IMR-90 (cell line): ENCODE measurements at regions of chr17 and their contacts with region 1.

Region 1: GRCh38 chr17:1896243-1897104 is 66.7 kb downstream of the RPA1 start:
- DNase-seq: no peak
- ATAC-seq: no peak
- H3K4me3 ChIP-seq: no peak overlapping the region
- H3K27ac ChIP-seq: no peak overlapping the region
- H3K4me1 ChIP-seq: no peaks in the 10 kb centered on the region
- H3K27me3 ChIP-seq: no peaks in the 10 kb centered on the region
- CTCF ChIP-seq: no peak
- POLR2A ChIP-seq: no peak
- RAD21 ChIP-seq: no peak

Region 2: DNA sequence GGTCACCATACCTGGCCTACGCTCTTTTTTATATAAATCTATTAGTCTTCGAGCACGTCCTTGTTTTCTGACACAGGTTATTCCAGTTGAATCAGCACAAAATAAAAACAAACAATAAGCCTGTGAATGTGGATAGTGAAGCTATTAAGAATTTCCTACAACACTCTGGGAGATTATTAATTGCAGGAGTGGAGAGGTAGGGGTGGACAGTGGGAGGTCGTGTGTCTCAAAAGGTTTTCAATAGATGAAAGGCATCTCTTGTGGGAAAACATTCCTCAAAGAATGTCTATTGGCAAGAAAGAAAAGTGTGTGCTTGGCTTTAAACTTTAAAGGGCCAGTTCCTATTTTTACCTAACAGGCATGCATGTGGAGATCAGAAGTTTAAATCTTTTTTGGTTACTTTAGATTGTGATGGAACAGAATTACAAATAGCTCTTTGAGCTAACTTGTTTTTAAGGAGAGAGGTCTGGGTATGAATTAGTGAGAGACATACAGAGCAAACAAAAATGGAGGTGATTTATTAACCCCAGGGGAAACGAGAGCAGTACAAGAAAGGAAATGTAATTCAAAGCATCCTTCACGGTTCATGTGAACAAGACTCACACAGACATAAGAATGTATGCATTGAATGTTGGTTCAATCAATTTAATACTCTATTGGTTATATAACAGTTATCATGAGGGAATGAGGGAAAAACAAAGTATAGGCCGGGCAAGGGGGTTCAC is 75.8 kb before region 1 on chr17:
- CTCF ChIA-PET with region 1: no interaction called
- POLR2A ChIA-PET with region 1: interaction called, 20 read pairs
- dilution Hi-C with region 1: no loop called
- in situ Hi-C with region 1: no loop called
- intact Hi-C with region 1: no loop called
- DNase-seq: no peak
- ATAC-seq: no peak
- H3K4me3 ChIP-seq: no peak overlapping the region
- H3K27ac ChIP-seq: no peak overlapping the region
- H3K4me1 ChIP-seq: no peaks in the 10 kb centered on the region
- H3K27me3 ChIP-seq: no peaks in the 10 kb centered on the region
- CTCF ChIP-seq: no peak
- POLR2A ChIP-seq: no peak
- RAD21 ChIP-seq: no peak

Region 3: DNA sequence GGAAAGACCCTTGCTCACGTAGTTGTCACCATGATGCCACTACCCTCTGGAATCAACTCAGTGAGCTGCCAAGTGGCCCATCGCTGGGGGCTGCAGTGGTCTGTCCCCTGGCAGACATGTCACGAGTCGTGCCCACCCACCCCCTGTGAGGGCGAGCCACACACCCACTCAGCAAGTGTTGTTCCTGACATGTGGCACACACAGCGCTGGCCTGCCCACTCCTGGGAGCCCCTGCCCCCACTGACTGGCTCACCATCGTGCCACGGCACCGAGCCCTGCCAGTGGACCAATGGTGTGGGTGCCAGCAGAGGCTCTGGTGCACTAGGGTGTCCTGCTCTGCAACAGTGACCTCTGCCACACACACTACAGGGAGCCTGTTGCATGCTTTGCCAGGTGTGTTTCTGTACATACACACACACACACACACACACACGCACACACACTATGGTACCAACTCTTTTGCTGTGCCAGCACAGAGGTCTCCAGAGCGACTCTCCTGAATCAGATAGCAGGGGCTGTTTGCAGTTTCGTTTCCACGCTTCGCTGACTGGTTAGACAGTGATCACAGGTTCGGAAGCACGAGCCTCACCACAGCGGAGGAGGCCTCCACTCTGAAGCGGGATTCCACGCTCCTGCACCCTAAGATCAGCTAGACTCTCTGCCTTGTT is 120.9 kb after region 1 on chr17:
- CTCF ChIA-PET with region 1: no interaction called
- POLR2A ChIA-PET with region 1: no interaction called
- dilution Hi-C with region 1: no loop called
- in situ Hi-C with region 1: no loop called
- intact Hi-C with region 1: no loop called
- DNase-seq: no peak
- ATAC-seq: no peak
- H3K4me3 ChIP-seq: no peak overlapping the region
- H3K27ac ChIP-seq: no peak overlapping the region
- H3K4me1 ChIP-seq: no peaks in the 10 kb centered on the region
- H3K27me3 ChIP-seq: peaks cover 69% of the 10 kb centered on the region
- CTCF ChIP-seq: no peak
- POLR2A ChIP-seq: no peak
- RAD21 ChIP-seq: no peak